AG04449 (cell line): ENCODE measurements at regions of chr4 and their contacts with region 1.

Region 1: DNA sequence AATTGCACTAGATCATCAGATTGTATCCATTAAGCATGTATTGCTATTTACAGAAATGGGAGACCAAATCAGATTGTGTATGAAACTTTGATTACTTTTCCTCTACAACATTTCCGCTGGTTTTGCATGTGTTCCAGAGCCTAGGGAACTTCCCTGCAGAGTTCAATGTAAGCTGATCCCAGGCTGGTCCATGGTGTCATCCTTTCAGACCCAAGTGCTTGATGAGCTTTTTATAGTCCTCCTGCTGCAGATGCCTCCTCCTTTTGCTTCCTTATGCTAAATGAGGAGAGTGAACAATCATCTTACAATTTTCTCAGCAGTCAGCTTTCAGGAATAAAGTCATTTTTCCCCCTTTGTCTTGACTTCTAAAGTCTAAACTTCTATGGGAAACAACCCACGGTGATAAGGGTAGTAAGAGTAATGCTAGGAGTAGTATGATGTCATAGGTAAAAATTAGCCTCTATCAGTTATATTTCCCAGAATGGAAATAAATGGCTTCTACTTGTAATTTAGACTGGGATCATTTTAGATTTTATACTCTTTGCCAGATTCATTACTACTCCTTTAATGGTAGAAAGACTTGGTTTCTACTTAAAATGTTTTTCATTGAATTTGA is 55.1 kb upstream of the SLC4A4 start:
- DNase-seq: no peak
- H3K4me3 ChIP-seq: no peak overlapping the region
- CTCF ChIP-seq: no peak

Region 2: GRCh38 chr4:71270901-71271300 is 12.8 kb before region 1 on chr4:
- CTCF ChIA-PET with region 1: interaction called, 15 read pairs
- POLR2A ChIA-PET with region 1: no interaction called
- DNase-seq: no peak
- H3K4me3 ChIP-seq: no peak overlapping the region
- CTCF ChIP-seq: peak; percentile 40

Region 3: GRCh38 chr4:71635139-71635748 is 351.5 kb after region 1 on chr4:
- CTCF ChIA-PET with region 1: no interaction called
- POLR2A ChIA-PET with region 1: no interaction called
- DNase-seq: no peak
- H3K4me3 ChIP-seq: no peak overlapping the region
- CTCF ChIP-seq: no peak